HEK293 (cell line): ENCODE measurements at regions of chr9 and their contacts with region 1.

Region 1: DNA sequence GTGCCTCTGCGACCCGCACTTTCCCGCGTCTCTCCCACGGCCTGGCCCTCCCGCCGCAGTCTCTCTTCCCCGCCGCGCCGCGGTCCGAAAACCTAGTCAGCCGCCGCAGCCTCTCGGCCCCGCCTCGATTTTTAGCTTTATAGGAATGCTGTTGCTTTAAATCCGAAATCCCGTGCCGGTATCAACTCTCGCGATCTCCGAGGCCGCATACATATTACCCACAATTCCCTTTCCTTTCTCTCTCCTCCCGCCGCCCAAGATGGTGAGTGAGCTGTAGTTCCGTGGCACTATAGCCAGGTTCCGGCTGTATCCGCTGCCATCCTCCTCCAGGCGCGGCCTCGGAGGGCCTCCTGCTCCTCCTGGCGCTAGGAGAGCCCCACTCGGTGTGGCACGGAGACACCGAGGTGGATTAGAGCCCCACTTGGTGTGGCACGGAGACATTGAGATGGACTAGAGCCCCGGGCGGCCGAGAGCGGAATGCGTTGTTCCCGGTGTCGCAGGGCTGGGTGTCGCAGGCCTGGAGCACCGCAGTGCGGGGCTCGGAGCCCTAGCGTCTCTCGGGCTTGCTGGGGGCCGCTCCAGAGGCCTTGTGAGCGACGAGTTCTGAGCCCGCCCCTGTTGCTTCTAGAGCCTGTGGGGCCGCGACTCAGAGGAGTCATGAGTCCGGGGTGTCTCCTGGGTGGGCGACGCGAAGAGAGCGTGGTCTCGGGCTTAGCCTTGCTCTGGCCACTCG is at the starts of genes MED22 and RPL7A:
- H3K4me3 ChIP-seq: peak within 1 kb of the TSS; percentile 91
- H3K27ac ChIP-seq: peak within 1 kb of the TSS; percentile 100
- H3K4me1 ChIP-seq: no peaks in the 10 kb centered on the region
- CTCF ChIP-seq: peak; percentile 58; the same call in 1 of the 2 replicates

Region 2: DNA sequence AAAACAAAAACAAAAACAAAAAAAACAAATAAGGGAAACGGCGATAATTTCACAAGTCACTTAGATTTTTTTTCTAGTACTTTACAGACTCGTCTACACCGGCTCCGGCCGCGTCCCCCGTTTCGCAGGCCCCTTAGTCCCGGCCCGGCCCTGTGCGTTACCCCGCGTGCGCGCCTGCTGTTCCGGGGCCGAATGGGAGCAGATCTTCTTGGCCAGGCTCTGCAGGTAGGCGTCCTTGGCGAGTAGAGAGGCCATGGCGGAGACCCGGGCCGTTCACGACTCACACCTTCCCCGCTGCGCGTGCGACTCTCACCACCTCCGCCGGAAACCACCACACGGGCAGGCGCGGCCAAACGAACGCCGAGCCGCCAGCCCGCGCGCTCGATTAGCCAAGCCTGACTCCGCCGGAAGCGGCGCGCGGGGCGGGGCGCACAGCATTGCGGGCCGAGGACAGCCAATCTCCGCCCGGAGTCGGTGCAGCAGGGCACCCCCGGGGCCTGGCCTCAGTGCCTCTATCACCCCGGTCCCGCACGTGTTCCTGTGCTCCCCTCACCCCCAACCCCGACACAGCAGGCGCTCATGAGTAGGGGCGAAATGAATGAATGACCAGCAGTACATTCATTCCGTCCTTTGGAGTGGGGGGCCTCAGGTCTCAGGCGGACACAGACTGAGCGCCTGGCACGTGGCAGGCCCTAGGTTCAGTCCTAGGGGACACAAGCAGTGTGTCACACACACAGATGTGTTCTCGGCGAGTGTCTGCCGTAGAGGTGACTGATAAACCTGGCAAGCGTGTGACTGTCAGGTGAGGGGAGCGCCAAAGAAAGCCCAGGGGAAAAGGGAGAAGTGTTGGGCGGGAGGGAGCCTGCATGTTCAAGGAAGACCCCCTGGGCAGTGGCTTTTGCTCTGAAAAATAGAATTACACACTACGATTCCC is 12.0 kb before region 1 on chr9 and contains the start of gene SURF6:
- CTCF ChIA-PET with region 1: interaction called, 3 read pairs
- POLR2A ChIA-PET with region 1: interaction called, 18 read pairs
- H3K4me3 ChIP-seq: peak within 1 kb of the TSS; percentile 74
- H3K27ac ChIP-seq: peak within 1 kb of the TSS; percentile 71
- H3K4me1 ChIP-seq: peaks cover 4% of the 10 kb centered on the region; the same call in 1 of the 2 replicates
- CTCF ChIP-seq: no peak

Region 3: GRCh38 chr9:133367778-133368177 is 19.6 kb after region 1 on chr9:
- CTCF ChIA-PET with region 1: interaction called, 7 read pairs
- POLR2A ChIA-PET with region 1: interaction called, 35 read pairs
- H3K4me3 ChIP-seq: no peak overlapping the region
- H3K27ac ChIP-seq: no peak overlapping the region
- H3K4me1 ChIP-seq: no peaks in the 10 kb centered on the region
- CTCF ChIP-seq: no peak

Region 4: DNA sequence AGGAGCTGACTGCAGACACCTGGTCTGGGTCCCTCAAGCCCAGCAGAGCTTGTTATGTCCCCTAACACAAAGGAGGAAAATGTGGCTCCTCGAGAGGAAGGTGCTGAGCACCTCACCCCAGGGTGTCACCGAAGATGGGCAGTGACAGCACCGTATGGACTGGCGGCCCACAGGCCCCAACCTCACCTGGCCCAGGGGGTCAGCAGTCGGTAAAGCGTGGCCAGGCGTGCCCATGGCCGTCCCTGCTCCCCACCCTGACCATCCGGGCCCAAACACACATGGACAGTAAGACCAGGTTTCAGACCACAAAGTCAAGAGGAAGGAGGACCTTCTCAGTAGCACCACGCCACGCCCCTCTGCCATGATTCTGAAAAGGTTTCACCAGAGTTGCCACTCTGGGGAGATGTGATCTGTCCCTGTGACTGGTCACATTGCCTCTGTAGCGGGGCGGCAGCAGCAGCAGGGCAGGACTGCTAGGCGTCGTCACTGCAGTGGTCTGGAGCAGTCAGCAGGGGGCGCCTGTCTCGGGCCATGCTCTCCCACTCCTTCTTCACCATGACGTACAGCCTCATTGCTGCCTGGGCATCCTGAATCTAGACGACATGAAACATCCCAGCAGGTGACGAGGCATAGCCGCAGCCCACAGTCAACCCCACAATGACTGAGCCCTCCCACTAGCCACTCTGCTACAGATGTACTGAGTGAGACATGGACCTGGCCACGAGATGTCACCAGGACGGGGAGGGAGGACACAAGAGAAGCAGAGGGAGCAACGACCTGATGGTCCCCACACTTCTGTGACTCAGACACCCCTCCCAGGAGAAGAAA is 58.5 kb after region 1 on chr9:
- CTCF ChIA-PET with region 1: interaction called, 12 read pairs
- POLR2A ChIA-PET with region 1: interaction called, 3 read pairs
- H3K4me3 ChIP-seq: no peak overlapping the region
- H3K27ac ChIP-seq: no peak overlapping the region
- H3K4me1 ChIP-seq: no peaks in the 10 kb centered on the region
- CTCF ChIP-seq: peak; percentile 92

Region 5: DNA sequence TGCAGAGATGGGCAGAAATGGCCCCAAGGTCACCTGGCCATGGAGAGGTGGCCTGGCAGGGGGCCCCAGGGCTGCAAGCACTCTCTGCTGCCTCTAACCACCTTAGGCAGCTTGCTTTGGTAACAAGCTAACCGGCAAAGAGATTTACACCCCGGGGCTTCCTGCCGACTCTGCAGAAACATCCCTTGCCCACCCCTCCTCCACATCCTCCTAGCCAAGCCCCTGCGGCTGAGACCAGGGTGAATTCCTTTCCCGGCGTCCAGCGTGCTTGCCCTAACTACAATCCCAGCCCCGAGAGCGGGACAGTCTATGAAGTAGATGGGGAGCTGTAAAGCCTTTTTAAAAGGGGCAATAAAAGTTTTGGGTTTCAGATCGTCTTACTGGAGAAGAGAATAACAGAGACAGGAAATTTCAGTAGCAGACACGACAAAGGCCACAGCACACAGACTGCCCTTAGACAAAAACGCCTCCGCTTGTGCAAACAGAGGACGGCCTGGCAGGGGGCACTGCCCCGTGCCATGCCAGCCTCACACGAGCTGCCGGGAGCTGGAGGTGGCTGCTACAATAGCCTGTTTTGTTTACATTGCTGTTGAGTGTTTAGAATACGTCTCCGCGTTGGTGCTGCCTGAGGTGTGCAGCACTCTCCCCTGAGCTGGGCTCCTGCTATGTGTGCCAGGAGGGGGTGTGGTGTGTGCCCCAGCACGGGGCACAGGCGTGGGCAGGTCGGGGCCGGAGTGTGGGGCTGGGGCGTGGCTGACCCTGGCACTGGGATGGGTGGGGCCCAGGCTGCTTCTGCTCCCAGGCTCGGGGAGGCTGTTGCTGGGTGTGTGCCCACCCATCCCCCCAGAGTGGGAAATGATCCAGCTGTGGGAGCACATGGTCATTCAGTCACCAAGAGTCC is 161.3 kb after region 1 on chr9:
- CTCF ChIA-PET with region 1: no interaction called
- POLR2A ChIA-PET with region 1: no interaction called
- H3K4me3 ChIP-seq: no peak overlapping the region
- H3K27ac ChIP-seq: no peak overlapping the region; the same call in 1 of the 2 replicates
- H3K4me1 ChIP-seq: peaks cover 8% of the 10 kb centered on the region
- CTCF ChIP-seq: peak; percentile 24; the same call in 1 of the 2 replicates

Region 6: DNA sequence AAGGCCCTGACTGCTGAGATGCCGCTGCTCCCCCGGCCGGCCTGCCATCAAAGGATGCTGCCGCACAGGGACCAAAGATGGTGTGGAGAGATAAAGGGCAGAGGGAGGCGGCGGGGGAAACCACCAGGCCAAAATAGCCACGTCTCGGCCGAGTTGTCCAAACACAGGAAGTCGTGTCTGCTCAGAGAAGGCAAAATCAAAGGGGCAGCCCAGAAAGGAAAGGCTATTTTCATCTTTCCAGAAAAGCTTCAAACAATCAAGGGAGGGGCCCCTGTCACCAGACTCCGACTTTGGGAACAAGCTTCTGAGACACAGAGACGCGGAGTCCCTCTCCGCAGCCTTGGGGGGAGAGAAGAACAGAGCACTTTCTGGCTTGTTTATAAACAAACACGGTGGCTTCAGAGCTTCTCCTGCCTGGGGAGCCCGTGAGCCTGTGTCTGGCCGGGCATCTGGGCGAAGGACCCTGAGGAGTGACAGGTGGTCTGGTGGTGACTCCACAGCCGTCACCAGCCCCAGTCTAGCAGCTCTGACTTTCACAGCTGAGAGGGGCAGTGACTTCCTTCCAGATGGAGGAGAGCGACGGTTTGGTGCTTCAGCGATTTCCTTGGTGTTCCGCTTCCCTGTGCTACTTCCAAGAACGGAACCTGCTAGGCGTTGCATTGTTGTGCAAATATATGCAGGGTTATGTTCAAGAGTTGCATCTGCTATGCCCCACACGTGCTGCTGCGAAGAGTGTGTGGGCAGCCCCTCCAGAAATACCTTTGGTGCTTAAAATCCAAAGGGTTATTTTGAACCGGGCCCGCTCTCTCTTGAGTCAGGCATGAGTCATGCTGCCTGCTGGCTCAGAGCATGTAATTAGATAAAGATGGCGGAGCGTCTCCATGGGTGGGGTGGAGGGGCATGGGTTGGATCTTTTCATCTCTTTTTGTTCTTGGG is 210.3 kb after region 1 on chr9:
- CTCF ChIA-PET with region 1: no interaction called
- POLR2A ChIA-PET with region 1: no interaction called
- H3K4me3 ChIP-seq: no peak overlapping the region
- H3K27ac ChIP-seq: no peak overlapping the region
- H3K4me1 ChIP-seq: peaks cover 4% of the 10 kb centered on the region
- CTCF ChIP-seq: no peak